ENCODE measurements at regions of chr4 and their contacts with region 1.

Region 1: GRCh38 chr4:139416073-139416673 is 37.7 kb upstream of the RAB33B start:
- DNase-seq: peak; percentile 74 to 88 (median 84)
- H3K4me3 ChIP-seq: no peak overlapping the region
- H3K27ac ChIP-seq: no peak overlapping the region
- H3K4me1 ChIP-seq: peaks cover 11 to 34% (median 28%) of the 10 kb centered on the region in 4 experiments
- H3K27me3 ChIP-seq: no peaks in the 10 kb centered on the region

Region 2: DNA sequence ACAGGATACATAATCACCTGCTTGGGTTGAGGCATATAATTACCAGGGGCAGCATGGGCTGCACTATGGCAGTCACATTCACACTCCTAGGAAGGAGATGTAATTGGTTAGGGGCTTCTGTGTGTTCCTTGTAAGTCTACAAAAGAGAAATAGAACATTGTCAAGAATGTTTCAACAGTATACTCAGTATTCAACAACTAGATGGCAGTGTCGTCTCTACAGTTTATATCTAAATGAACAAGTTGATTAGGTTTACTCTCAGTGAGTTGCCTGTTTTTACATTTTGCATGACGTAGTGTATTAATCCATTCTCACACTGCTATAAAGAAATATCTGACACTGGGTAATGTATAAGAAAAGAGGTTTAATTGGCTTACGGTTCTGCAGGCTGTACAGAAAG is 12.7 kb before region 1 on chr4:
- CTCF ChIA-PET with region 1: interaction called, 14 read pairs
- POLR2A ChIA-PET with region 1: no interaction called
- DNase-seq: peak; percentile 25 to 54 (median 54)
- H3K4me3 ChIP-seq: no peak overlapping the region
- H3K27ac ChIP-seq: no peak overlapping the region
- H3K4me1 ChIP-seq: no peaks in the 10 kb centered on the region
- H3K27me3 ChIP-seq: no peaks in the 10 kb centered on the region

Region 3: GRCh38 chr4:139453371-139454110 is 37.4 kb after region 1 on chr4:
- CTCF ChIA-PET with region 1: interaction called, 13 read pairs
- POLR2A ChIA-PET with region 1: interaction called, 17 read pairs
- DNase-seq: peak; percentile 98 to 99 (median 99)
- H3K4me3 ChIP-seq: peak overlapping the region; percentile 77 to 100 (median 96)
- H3K27ac ChIP-seq: peak overlapping the region; percentile 79 to 93
- H3K4me1 ChIP-seq: peaks cover 15 to 46% (median 36%) of the 10 kb centered on the region in 4 experiments
- H3K27me3 ChIP-seq: no peaks in the 10 kb centered on the region

Region 4: GRCh38 chr4:139499026-139499585 is 82.9 kb after region 1 on chr4:
- CTCF ChIA-PET with region 1: interaction called, 15 read pairs
- POLR2A ChIA-PET with region 1: interaction called, 3 read pairs
- DNase-seq: peak in 2 of 3 donors; percentile 19 to 23
- H3K4me3 ChIP-seq: no peak overlapping the region
- H3K27ac ChIP-seq: no peak overlapping the region
- H3K4me1 ChIP-seq: peaks cover 0 to 16% (median 8%) of the 10 kb centered on the region in 4 experiments
- H3K27me3 ChIP-seq: no peaks in the 10 kb centered on the region